Activated CD8-positive, alpha-beta T cell treated with anti-CD3 and anti-CD28 coated beads, Interleukin-2, amount 10 ng/mL, durations not matched to agents 7 days and 5 days (primary cell): ENCODE measurements at regions of chr20 and their contacts with region 1.

Region 1: GRCh38 chr20:36199345-36200257 is 36.7 kb upstream of the AAR2 start:
- DNase-seq: peak; percentile 81
- ATAC-seq: peak; percentile 81
- H3K4me3 Mint-ChIP-seq: no peak overlapping the region
- H3K27ac Mint-ChIP-seq: no peak overlapping the region
- H3K4me1 Mint-ChIP-seq: peaks cover 4% of the 10 kb centered on the region
- H3K27me3 Mint-ChIP-seq: peaks cover 3% of the 10 kb centered on the region

Region 2: GRCh38 chr20:35978041-35978513 is 221.5 kb before region 1 on chr20:
- CTCF ChIA-PET with region 1: no interaction called
- POLR2A ChIA-PET with region 1: no interaction called
- DNase-seq: no peak
- ATAC-seq: no peak
- H3K4me3 Mint-ChIP-seq: no peak overlapping the region
- H3K27ac Mint-ChIP-seq: no peak overlapping the region
- H3K4me1 Mint-ChIP-seq: no peaks in the 10 kb centered on the region
- H3K27me3 Mint-ChIP-seq: peaks cover 6% of the 10 kb centered on the region

Region 3: GRCh38 chr20:35994994-35995453 is 204.6 kb before region 1 on chr20:
- CTCF ChIA-PET with region 1: interaction called, 31 read pairs
- POLR2A ChIA-PET with region 1: no interaction called
- DNase-seq: peak; percentile 85
- ATAC-seq: peak; percentile 88
- H3K4me3 Mint-ChIP-seq: no peak overlapping the region
- H3K27ac Mint-ChIP-seq: no peak overlapping the region
- H3K4me1 Mint-ChIP-seq: peaks cover 2% of the 10 kb centered on the region
- H3K27me3 Mint-ChIP-seq: peaks cover 8% of the 10 kb centered on the region

Region 4: DNA sequence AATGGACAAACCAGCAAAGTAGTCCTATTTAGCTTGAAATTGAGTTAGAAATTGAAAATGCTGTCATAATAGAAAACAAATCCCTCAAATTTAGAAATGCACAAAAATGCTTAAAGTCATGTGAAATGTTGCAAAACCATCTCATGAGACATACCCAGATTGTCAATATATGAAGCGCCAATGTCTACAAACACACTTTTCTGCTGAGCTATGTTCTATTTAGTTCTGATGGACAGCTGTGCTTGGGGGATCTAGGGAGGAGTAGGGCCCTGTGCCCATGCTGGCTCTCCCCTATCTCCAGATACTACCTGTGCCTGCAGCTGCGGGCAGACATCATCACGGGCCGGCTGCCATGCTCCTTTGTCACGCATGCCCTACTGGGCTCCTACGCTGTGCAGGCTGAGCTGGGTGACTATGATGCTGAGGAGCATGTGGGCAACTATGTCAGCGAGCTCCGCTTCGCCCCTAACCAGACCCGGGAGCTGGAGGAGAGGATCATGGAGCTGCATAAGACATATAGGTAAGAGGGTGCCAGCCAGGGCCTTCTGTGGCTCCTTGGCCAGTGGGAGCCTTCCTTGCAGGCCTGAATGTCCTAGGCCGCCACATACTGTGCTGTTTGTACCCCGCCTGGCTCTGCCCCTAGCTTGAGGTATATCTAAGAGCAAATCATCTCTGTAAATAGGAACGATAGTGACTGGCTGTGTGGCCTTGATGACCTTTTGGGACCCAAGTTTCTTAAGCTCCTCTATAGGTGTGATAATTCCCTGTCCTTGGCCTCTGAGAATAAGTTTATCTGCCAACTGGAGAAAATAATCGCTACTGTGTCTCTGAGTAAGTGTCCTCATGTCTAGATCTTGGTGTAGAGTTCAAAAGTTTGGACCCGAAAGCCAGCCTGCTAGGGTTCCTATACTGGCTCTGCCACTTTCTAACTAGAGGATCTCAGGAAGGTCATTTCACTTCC is 14.5 kb before region 1 on chr20:
- CTCF ChIA-PET with region 1: interaction called, 12 read pairs
- POLR2A ChIA-PET with region 1: no interaction called
- DNase-seq: no peak
- ATAC-seq: no peak
- H3K4me3 Mint-ChIP-seq: no peak overlapping the region
- H3K27ac Mint-ChIP-seq: no peak overlapping the region
- H3K4me1 Mint-ChIP-seq: no peaks in the 10 kb centered on the region
- H3K27me3 Mint-ChIP-seq: no peaks in the 10 kb centered on the region

Region 5: GRCh38 chr20:36228770-36229169 is 29.2 kb after region 1 on chr20:
- CTCF ChIA-PET with region 1: interaction called, 21 read pairs
- POLR2A ChIA-PET with region 1: no interaction called
- DNase-seq: no peak
- ATAC-seq: no peak
- H3K4me3 Mint-ChIP-seq: no peak overlapping the region
- H3K27ac Mint-ChIP-seq: no peak overlapping the region
- H3K4me1 Mint-ChIP-seq: peaks cover 9% of the 10 kb centered on the region
- H3K27me3 Mint-ChIP-seq: peaks cover 10% of the 10 kb centered on the region

Region 6: DNA sequence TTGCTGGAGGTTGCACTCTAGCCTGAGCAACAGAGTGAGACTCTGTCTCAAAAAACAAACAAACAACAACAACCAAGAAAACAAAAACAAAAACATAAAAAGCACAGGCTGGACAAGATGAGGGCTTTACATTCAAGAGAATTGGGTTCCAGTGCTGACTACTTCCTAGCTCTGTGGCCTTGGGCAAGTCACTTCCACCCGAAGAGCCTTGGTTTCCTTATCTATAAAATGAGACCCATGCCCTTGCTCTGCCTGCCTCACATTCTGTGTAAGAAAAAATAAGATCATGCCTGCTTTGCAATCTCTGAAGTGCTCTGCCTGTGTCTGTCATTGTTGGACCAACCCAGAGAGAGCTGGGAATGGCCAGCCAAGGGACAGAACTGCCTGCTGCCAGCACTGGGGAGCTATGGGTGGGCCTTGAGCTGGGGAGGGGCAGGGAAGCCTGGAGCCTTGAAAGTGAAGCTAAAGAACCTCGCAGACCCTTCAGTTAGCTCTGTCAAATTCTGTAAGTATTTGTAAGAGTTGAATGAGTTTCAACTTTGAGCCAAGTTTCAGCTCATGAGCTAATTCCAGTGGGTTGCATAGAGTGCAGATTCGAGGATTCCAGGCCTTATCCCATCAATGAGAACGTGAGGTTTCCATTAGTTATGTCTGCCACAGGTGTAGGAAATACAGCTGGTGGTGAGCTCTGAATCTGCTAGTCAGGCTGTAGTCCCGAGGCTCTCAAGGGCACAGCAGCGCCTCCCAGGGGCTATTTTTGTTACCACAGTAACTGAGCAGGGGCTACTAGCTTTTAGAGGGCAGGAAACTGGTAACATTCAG is 199.8 kb after region 1 on chr20:
- CTCF ChIA-PET with region 1: interaction called, 17 read pairs
- POLR2A ChIA-PET with region 1: no interaction called
- DNase-seq: peak; percentile 56
- ATAC-seq: peak; percentile 68
- H3K4me3 Mint-ChIP-seq: no peak overlapping the region
- H3K27ac Mint-ChIP-seq: no peak overlapping the region
- H3K4me1 Mint-ChIP-seq: no peaks in the 10 kb centered on the region
- H3K27me3 Mint-ChIP-seq: peaks cover 23% of the 10 kb centered on the region